Activated CD8-positive, alpha-beta memory T cell treated with anti-CD3 and anti-CD28 coated beads, Interleukin-2, amount 10 ng/mL, durations not matched to agents 7 days and 5 days (primary cell): ENCODE measurements at regions of chr1 and their contacts with region 1.

Region 1: GRCh38 chr1:198157241-198157846 is 546 bp downstream of the NEK7 start:
- DNase-seq: peak; percentile 90
- ATAC-seq: peak; percentile 50
- H3K4me3 Mint-ChIP-seq: peak overlapping the region; percentile 99
- H3K27ac Mint-ChIP-seq: peak overlapping the region; percentile 99
- H3K4me1 Mint-ChIP-seq: peaks cover 30% of the 10 kb centered on the region
- H3K27me3 Mint-ChIP-seq: no peaks in the 10 kb centered on the region

Region 2: DNA sequence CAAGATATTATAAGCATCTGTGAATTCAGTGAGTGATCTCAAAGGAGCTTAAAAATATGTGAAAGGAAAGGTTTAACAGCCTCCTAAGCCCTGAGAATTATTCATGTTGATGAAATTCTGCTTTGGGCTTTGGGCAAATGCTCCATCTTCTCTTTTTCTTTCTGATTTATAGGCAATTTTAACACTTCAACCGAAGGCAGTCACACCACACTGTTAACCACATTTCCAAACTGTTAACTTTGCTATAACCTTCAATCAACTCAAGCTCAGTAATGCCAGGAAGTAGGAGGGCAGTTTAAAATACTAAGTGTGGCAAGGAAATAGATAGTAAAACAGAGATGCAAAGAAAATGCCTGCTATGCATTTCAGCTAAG is 54.9 kb before region 1 on chr1:
- CTCF ChIA-PET with region 1: interaction called, 17 read pairs
- DNase-seq: peak; percentile 50
- ATAC-seq: peak; percentile 91
- H3K4me3 Mint-ChIP-seq: peak overlapping the region; percentile 14
- H3K27ac Mint-ChIP-seq: peak overlapping the region; percentile 75
- H3K4me1 Mint-ChIP-seq: peaks cover 22% of the 10 kb centered on the region
- H3K27me3 Mint-ChIP-seq: no peaks in the 10 kb centered on the region

Region 3: GRCh38 chr1:198168227-198168626 is 10.9 kb after region 1 on chr1:
- CTCF ChIA-PET with region 1: interaction called, 11 read pairs
- DNase-seq: no peak
- ATAC-seq: peak; percentile 12
- H3K4me3 Mint-ChIP-seq: peak overlapping the region; percentile 37
- H3K27ac Mint-ChIP-seq: peak overlapping the region; percentile 85
- H3K4me1 Mint-ChIP-seq: peaks cover 83% of the 10 kb centered on the region
- H3K27me3 Mint-ChIP-seq: no peaks in the 10 kb centered on the region

Region 4: DNA sequence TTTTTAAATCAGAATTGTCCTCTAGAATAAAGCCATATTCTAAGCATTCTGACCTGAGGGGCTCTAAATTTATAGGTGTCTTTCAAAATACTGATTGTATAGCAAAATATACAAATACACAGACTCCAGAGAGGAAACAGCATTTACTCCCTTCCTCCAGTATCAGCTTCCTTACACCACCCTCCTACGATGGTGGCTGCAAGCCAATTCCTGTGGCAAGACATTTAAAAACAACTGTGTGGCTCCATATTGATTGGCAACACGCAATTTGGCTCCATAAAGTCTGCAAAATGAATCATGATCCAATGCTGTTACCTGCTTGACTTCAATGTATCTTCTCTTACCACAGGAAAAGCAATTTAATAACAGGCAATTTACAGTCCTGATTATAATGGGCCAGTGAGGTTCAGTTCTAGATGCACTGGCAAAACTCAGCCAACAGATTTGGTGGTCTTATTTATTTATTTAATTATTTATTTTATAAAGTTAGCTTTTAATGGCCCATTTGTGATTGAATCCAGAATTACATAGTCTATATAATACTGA is 402.8 kb after region 1 on chr1:
- CTCF ChIA-PET with region 1: no interaction called
- DNase-seq: no peak
- ATAC-seq: no peak
- H3K4me3 Mint-ChIP-seq: no peak overlapping the region
- H3K27ac Mint-ChIP-seq: no peak overlapping the region
- H3K4me1 Mint-ChIP-seq: peaks cover 58% of the 10 kb centered on the region
- H3K27me3 Mint-ChIP-seq: no peaks in the 10 kb centered on the region